ENCODE measurements at regions of chr12 and their contacts with region 1.

Region 1: GRCh38 chr12:32365473-32366064 is 33.8 kb upstream of the FGD4 start:
- DNase-seq: no peak
- ATAC-seq: peak in 3 of 4 donors; percentile 66 to 85 (median 74)
- H3K4me3 ChIP-seq: no peak overlapping the region
- H3K27ac ChIP-seq: no peak overlapping the region
- H3K4me1 ChIP-seq: no peaks in the 10 kb centered on the region
- H3K27me3 ChIP-seq: no peaks in the 10 kb centered on the region
- CTCF ChIP-seq: peak; percentile 72

Region 2: DNA sequence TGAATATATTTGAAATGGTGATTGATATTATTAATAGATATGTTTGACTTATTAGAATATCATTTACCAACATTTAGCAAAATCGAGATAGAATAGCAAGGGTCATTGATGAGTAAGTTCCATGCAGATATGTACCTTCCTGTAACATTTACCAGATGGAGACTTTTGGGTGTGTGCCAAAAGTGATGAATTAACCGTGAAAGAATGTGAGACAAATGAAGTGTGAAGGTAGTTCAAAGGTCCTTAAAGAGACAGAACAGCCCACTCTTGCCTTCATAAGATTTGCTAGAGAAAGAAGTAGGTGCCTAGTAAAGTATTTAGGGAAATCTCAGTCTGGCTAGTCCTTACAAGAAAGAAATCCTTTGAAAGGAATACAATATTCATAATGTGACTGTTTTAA is 79.3 kb after region 1 on chr12:
- intact Hi-C with region 1: loop called in 1 of 2 experiments (anchors 5 kb)
- DNase-seq: no peak
- ATAC-seq: no peak
- H3K4me3 ChIP-seq: no peak overlapping the region
- H3K27ac ChIP-seq: no peak overlapping the region
- H3K4me1 ChIP-seq: no peaks in the 10 kb centered on the region
- H3K27me3 ChIP-seq: no peaks in the 10 kb centered on the region
- CTCF ChIP-seq: no peak

Region 3: GRCh38 chr12:32671930-32672780 is 306.6 kb after region 1 on chr12:
- intact Hi-C with region 1: loop called (anchors 1 to 5 kb)
- DNase-seq: no peak
- ATAC-seq: peak; percentile 86 to 96 (median 90)
- H3K4me3 ChIP-seq: no peak overlapping the region
- H3K27ac ChIP-seq: no peak overlapping the region
- H3K4me1 ChIP-seq: peaks cover 7% of the 10 kb centered on the region
- H3K27me3 ChIP-seq: no peaks in the 10 kb centered on the region
- CTCF ChIP-seq: peak; percentile 63

Region 4: DNA sequence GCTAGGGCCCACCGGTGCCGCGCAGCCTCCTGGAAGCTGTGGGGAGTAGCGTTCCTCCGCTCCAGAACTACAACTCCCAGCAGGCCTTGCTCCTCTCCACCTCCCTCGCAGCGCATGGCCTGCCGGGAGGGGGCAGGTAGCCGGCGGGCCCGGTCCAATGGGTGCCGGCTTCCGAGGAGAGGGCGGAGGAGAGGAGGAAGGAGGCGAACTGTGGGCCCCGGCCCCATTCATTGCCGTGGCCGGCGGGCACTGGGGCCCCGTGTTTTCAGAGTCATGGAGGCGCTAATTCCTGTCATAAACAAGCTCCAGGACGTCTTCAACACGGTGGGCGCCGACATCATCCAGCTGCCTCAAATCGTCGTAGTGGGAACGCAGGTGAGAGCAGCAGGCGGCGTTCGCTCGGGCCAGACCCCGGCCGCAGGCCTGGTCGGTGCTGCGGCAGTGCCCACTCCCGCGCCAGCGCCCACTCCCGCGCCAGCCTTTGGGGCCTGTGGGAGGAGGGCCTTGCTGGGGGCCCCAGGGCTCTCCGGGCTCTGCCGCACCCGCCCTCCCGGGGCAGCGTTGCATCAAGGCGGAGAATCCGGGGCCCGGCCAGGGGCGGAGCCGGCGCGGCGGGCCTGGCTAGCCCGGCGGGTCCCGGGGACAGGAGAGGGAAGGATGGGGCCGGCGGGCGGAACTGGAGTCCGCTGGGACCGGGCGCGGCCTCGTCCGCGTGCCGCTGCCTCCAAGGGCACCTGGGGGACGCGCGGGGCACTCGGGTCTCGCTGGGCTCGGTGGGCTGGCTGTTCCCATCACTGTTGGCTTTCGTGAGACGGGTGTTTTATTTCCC is 313.7 kb after region 1 on chr12 and contains the start of gene DNM1L:
- intact Hi-C with region 1: loop called in 1 of 2 experiments (anchors 5 kb)
- DNase-seq: peak; percentile 93 to 96
- ATAC-seq: peak; percentile 98 to 99 (median 98)
- H3K4me3 ChIP-seq: peak within 1 kb of the TSS; percentile 100
- H3K27ac ChIP-seq: peak within 1 kb of the TSS; percentile 90
- H3K4me1 ChIP-seq: peaks cover 13% of the 10 kb centered on the region
- H3K27me3 ChIP-seq: no peaks in the 10 kb centered on the region
- CTCF ChIP-seq: peak; percentile 26
- total RNA-seq, gene DNM1L: 32.3 to 62.9 (median 44.3) TPM

Measured in psoas muscle (tissue), 8 donors.